BJ (cell line): ENCODE measurements at regions of chr13 and their contacts with region 1.

Region 1: DNA sequence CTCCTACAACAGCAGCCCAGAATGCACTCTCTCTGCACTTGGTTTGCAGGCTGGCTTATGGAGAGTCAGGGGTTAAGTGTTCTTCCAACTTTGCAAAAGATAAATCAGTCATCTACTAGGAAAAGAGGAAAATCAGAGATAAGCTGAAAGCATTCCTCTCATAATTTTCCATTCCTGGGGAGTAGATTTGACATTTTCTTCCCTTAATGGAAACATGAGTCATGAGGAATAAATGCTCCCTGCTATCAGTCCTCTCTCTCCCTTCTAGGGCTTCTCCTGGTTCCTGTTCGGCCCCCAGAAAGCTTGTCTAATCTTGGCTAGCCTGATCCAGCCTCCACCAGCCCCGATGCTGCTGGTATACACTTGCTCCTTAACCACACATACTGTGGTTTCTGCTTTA is 28.4 kb upstream of the ENOX1 start:
- DNase-seq: no peak
- H3K4me3 ChIP-seq: no peak overlapping the region
- H3K27me3 ChIP-seq: no peaks in the 10 kb centered on the region
- CTCF ChIP-seq: no peak

Region 2: GRCh38 chr13:43804461-43805070 is 10.6 kb before region 1 on chr13:
- CTCF ChIA-PET with region 1: interaction called, 10 read pairs
- POLR2A ChIA-PET with region 1: no interaction called
- DNase-seq: no peak
- H3K4me3 ChIP-seq: no peak overlapping the region
- H3K27me3 ChIP-seq: no peaks in the 10 kb centered on the region
- CTCF ChIP-seq: peak; percentile 37

Region 3: DNA sequence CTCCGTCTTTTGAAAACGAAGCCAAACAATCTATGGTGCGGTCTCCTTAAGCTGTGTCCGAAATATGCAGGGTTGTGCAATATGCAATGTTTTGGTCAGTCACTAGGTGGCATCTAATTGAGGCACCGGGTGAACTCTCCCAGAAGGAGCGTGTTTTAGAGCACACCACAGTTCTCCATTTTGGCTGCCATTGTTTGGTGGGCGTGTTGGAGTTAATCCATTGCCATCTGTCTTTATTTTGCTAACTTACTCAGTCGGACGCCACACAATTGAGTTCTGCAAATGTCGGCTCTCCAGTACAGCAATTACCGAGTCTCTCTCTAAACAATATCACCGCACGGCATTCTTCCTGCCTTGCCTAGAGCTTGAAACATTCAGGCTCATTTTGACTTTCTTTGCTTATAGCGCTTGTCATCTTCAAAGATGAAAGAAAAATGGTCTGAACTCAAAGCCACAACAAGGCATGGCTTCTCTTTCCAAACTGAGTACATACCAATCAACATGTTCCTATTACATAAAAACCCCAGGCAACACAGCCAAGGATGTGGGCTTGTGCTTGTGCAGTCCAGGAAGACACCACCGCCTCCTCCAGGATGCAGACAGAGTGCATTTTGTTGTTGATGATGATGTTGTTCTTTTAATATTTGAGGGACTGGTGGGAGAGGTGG is 376.4 kb after region 1 on chr13:
- CTCF ChIA-PET with region 1: no interaction called
- POLR2A ChIA-PET with region 1: no interaction called
- DNase-seq: peak; percentile 46
- H3K4me3 ChIP-seq: no peak overlapping the region
- H3K27me3 ChIP-seq: peaks cover 3% of the 10 kb centered on the region
- CTCF ChIP-seq: peak; percentile 77